Activated B cell treated with CpG ODN at 0.5 μM for 24 hours (primary cell): ENCODE measurements at regions of chr12 and their contacts with region 1.

Region 1: GRCh38 chr12:14365294-14366208 is at the start of gene ATF7IP:
- DNase-seq: peak; percentile 89
- ATAC-seq: peak; percentile 83
- H3K4me3 Mint-ChIP-seq: peak within 1 kb of the TSS; percentile 87
- H3K27ac Mint-ChIP-seq: peak within 1 kb of the TSS; percentile 97
- H3K4me1 Mint-ChIP-seq: peaks cover 64% of the 10 kb centered on the region
- H3K27me3 Mint-ChIP-seq: no peaks in the 10 kb centered on the region
- CTCF ChIP-seq: no peak
- total RNA-seq, gene ATF7IP: 142 and 153 TPM in 2 replicates

Region 2: DNA sequence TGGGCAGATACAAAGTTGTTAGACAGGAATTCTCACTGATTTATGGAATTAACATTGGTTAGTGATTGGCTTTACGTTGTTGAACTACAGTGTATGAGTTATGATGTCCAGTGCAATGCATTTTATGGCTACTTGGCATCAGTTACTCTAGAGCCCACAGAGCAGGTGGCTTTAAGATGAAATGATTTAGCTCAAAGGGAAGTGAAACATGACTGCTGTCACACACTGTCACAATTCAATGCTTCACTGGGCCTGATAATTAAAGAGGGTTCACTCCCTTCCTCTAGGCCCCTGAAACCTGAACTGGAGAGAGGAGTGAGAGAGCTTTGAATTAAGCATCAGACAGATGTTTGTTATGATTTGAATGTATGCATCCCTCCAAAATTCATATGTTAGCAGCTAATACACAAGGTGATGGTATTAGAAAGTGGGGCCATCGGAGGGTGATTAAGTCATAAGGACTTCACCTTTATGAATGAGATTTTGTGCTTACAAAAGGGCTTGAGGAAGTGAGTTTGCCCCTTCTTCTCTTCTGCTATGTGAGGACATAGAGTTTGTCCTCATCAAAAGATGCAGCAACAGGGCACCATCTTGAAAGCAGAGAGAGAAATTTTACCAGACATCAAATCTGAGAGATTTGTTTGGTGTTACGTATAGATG is 208.3 kb before region 1 on chr12:
- CTCF ChIA-PET with region 1: no interaction called
- POLR2A ChIA-PET with region 1: no interaction called
- intact Hi-C with region 1: loop called (anchors 10 kb)
- DNase-seq: no peak
- ATAC-seq: peak; percentile 91
- H3K4me3 Mint-ChIP-seq: peak overlapping the region; percentile 62
- H3K27ac Mint-ChIP-seq: peak overlapping the region; percentile 97
- H3K4me1 Mint-ChIP-seq: peaks cover 71% of the 10 kb centered on the region
- H3K27me3 Mint-ChIP-seq: no peaks in the 10 kb centered on the region
- CTCF ChIP-seq: no peak

Region 3: DNA sequence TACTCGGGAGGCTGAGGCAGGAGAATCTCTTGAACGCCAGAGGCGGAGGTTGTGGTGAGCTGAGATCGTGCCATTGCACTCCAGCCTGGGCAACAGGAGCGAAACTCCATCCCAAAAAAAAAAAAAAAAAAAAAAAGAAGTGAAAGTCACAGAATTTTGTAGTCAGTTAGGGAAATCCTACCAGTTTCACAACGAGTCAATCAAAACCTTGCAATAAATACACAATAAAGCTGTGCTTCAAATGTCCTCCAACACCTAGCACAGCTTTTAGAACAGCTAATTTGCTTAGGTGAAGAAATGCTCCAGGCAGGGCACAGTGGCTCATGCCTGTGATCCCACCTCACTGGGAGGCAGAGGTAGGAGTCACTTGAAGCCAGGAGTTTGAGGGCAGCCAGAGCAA is 112.9 kb before region 1 on chr12:
- CTCF ChIA-PET with region 1: interaction called, 15 read pairs
- POLR2A ChIA-PET with region 1: interaction called, 79 read pairs
- intact Hi-C with region 1: loop called (anchors 1 kb)
- DNase-seq: no peak
- ATAC-seq: no peak
- H3K4me3 Mint-ChIP-seq: no peak overlapping the region
- H3K27ac Mint-ChIP-seq: peak overlapping the region; percentile 56
- H3K4me1 Mint-ChIP-seq: peaks cover 51% of the 10 kb centered on the region
- H3K27me3 Mint-ChIP-seq: no peaks in the 10 kb centered on the region
- CTCF ChIP-seq: no peak

Region 4: DNA sequence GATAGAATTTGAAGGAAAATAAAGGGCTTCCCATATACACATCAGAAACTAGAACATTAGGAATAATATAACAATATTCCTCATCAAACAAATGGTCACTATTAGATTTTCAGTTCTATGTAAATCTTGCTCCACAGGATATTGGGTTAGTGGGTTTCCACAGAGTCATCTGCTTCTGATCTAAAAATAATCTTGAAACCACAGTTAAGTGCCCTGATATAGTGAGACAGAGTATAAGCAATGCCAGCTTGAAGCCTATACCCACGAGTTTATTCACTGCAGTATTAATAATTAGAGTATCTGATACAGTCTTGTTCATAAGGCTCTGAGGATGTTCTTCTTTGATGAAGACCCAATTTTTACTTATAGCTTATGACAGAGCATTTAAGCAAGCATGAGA is 74.6 kb before region 1 on chr12:
- CTCF ChIA-PET with region 1: interaction called, 7 read pairs
- POLR2A ChIA-PET with region 1: interaction called, 29 read pairs
- intact Hi-C with region 1: no loop called
- DNase-seq: no peak
- ATAC-seq: peak; percentile 90
- H3K4me3 Mint-ChIP-seq: peak overlapping the region; percentile 29
- H3K27ac Mint-ChIP-seq: peak overlapping the region; percentile 78
- H3K4me1 Mint-ChIP-seq: peaks cover 41% of the 10 kb centered on the region
- H3K27me3 Mint-ChIP-seq: no peaks in the 10 kb centered on the region
- CTCF ChIP-seq: no peak

Region 5: DNA sequence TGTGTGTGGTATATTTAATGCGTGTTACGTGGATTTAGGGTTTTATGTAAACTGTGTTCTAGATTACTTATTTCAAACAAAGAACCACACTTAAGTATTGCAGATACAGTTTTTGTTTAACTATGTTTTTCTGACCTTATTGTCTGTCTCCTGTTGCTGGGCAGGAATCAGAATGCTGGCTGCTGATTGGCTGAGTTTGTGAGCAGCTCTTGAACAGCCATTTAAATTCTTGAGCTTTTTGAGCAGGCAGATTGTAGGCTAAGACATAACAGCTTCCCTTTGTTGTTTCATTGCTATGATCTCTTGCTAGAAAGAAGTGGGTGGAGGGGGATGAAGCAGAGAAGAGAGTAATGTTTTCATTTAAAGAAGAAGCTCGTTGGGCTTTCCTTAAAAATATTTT is 52.2 kb after region 1 on chr12:
- CTCF ChIA-PET with region 1: interaction called, 5 read pairs
- POLR2A ChIA-PET with region 1: interaction called, 11 read pairs
- intact Hi-C with region 1: loop called (anchors 1 kb)
- DNase-seq: no peak
- ATAC-seq: peak; percentile 59
- H3K4me3 Mint-ChIP-seq: peak overlapping the region; percentile 58
- H3K27ac Mint-ChIP-seq: peak overlapping the region; percentile 82
- H3K4me1 Mint-ChIP-seq: peaks cover 55% of the 10 kb centered on the region
- H3K27me3 Mint-ChIP-seq: no peaks in the 10 kb centered on the region
- CTCF ChIP-seq: no peak

Region 6: DNA sequence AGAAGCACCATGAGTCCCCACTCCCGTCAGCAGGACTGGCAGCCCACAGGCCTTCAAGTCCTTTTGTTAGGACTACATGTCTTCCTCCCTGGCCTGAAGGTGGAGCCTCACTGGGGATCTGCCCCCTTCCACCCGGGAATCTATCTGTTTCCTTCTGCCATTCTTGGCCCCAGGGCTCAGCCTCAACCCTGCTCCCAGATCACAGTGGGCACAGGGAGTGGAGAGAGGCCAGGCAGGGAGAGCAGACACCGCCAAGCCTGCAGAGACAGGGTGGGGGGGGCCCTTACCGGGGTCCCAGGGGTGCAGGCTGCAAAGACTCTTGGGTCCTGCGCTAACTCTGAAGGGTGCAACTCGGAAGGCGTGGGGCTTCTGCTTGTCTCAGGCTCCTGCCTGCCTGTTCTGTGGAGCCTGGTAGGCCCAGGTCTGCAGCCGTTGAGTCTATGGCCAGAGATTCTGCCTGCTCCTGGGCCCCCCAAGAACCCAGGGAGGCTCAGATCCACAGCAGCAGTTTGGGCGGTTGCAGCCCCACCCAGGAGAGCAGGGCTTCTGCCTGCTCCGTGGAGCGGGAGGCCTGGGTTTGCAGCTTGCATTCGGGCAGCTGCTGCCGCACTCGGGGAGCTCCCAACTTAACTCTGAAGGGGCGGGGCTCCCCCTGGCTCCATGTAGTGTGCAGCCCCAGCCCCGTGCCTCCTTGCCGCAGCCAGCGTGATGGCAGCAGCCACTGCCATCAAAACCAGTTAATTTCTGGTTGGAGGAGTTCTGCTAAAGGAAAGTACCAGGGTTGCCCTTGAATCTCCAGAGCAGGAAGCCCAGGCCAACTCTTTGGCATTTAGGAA is 223.8 kb after region 1 on chr12:
- CTCF ChIA-PET with region 1: no interaction called
- POLR2A ChIA-PET with region 1: no interaction called
- intact Hi-C with region 1: no loop called
- DNase-seq: no peak
- ATAC-seq: no peak
- H3K4me3 Mint-ChIP-seq: no peak overlapping the region
- H3K27ac Mint-ChIP-seq: no peak overlapping the region
- H3K4me1 Mint-ChIP-seq: no peaks in the 10 kb centered on the region
- H3K27me3 Mint-ChIP-seq: no peaks in the 10 kb centered on the region
- CTCF ChIP-seq: no peak

Region 7: DNA sequence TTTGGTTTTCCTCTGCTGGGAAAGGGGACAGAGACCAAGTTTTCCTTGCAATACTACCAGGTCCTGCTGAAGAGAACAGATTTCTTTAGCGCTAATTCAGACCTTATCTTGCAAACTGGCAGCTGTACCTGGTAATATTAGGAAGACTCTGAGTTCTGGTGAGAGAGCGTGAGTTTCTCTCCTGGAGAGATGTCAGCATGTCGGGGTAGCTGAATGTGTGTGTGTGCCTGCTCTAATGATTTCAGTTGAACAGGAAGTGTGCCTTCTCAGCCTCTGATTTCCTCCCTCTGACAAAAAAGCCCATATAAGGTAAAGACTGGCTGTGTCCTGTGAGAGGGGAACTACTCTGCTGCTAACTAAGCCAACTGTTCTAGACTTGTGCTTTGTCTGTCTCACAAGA is 583.1 kb after region 1 on chr12:
- CTCF ChIA-PET with region 1: no interaction called
- POLR2A ChIA-PET with region 1: no interaction called
- intact Hi-C with region 1: loop called (anchors 2 kb)
- DNase-seq: no peak
- ATAC-seq: peak; percentile 91
- H3K4me3 Mint-ChIP-seq: peak overlapping the region; percentile 71
- H3K27ac Mint-ChIP-seq: peak overlapping the region; percentile 96
- H3K4me1 Mint-ChIP-seq: peaks cover 82% of the 10 kb centered on the region
- H3K27me3 Mint-ChIP-seq: no peaks in the 10 kb centered on the region
- CTCF ChIP-seq: no peak